IMR-90 (cell line): ENCODE measurements at regions of chr2 and their contacts with region 1.

Region 1: GRCh38 chr2:130372055-130372832 is 16.4 kb downstream of the PTPN18 start:
- DNase-seq: peak; percentile 69
- ATAC-seq: peak; percentile 93
- H3K4me3 ChIP-seq: peak overlapping the region; percentile 79
- H3K27ac ChIP-seq: peak overlapping the region; percentile 78
- H3K4me1 ChIP-seq: peaks cover 10% of the 10 kb centered on the region; the same call in 1 of the 2 replicates
- H3K27me3 ChIP-seq: no peaks in the 10 kb centered on the region
- CTCF ChIP-seq: peak; percentile 80
- POLR2A ChIP-seq: 0 out of 2 replicates have a peak, but pooled peaks have one; percentile 21
- RAD21 ChIP-seq: peak; percentile 39; the same call in 1 of the 2 replicates

Region 2: DNA sequence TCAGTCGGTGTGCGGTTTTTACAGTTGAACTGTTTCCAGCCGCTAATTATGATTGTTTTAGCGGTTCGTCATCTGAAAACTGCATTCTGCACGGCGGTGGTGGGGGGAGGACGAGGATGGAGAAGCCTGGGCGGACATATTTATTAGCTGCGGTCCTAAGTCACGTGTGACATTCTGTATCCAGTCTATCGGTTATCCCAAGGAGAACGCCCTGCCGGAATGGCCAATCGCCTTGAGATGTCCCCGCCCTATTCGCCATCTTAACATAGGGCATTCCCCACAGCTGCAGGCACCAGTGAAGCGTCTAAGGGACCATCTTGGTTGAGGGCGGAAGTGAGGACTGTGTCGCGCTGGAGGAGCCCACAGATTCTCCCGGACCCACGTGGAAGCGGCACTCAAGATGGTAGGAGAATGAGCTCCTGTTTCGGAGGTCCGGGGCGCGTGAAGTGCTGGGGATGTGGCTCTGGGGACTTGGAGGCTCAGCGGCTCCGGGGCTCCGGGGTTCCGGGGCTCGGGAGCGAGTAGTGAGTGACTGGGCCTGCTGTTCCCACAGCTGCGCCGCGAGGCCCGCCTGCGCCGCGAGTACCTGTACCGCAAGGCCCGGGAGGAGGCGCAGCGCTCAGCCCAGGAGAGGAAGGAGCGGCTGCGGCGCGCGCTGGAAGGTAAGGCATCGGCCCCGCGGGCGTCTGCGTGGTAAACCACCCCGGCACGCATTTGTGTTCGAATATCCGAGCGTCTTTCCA is 29.5 kb before region 1 on chr2 and contains the start of gene IMP4:
- CTCF ChIA-PET with region 1: interaction called, 3 read pairs
- POLR2A ChIA-PET with region 1: interaction called, 4 read pairs
- dilution Hi-C with region 1: no loop called
- in situ Hi-C with region 1: no loop called
- intact Hi-C with region 1: loop called (anchors 1 kb)
- DNase-seq: peak; percentile 100
- ATAC-seq: peak; percentile 92
- H3K4me3 ChIP-seq: peak within 1 kb of the TSS; percentile 96
- H3K27ac ChIP-seq: peak within 1 kb of the TSS; percentile 79
- H3K4me1 ChIP-seq: peaks cover 6% of the 10 kb centered on the region
- H3K27me3 ChIP-seq: no peaks in the 10 kb centered on the region
- CTCF ChIP-seq: peak; percentile 25
- POLR2A ChIP-seq: peak; percentile 55; the same call in 1 of the 2 replicates
- RAD21 ChIP-seq: 0 out of 2 replicates have a peak, but pooled peaks have one; percentile 27
- total RNA-seq, gene IMP4: 127 and 154 TPM in 2 replicates

Region 3: DNA sequence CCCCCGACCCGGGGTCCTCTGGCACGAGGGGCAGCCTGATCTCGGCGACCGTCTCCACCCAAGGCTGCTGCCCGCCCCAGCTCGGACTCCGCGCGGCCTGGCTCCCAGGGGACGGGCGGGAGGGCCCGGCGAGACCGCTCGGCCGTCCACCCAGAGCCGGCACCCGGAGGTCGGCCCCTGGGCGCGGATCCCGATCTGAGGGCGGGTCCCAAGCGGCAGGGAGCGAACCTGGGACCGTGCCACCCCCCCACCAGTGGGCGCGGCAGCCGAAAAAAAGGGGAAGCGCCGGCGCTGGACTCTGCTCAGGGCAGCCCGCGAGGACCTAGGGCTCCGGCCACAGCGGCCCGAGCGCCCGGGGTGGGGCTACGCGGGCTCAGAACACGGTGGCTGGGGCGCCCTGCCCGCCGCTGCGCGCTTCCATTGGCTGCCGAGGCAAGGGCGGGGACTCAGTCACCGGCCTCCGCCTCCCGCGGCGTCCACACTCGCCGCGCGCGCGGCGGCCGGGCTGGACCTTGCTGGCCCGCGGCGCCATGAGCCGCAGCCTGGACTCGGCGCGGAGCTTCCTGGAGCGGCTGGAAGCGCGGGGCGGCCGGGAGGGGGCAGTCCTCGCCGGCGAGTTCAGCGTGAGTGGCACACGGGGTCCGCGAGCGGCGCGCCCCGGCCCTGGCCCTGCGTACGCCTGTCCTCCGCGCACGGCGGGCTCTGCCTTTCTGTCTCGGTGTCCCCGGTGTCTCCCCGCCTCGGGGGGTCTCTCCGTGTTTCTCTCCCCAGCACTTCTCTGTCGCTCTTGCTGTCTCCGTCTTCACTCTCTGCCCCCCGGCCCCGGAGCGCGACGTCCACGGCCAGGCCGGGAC is 16.4 kb before region 1 on chr2 and contains the start of gene PTPN18:
- CTCF ChIA-PET with region 1: no interaction called
- POLR2A ChIA-PET with region 1: no interaction called
- dilution Hi-C with region 1: no loop called
- in situ Hi-C with region 1: no loop called
- intact Hi-C with region 1: loop called (anchors 1 kb)
- DNase-seq: peak; percentile 85
- ATAC-seq: peak; percentile 99
- H3K4me3 ChIP-seq: peak within 1 kb of the TSS; percentile 71
- H3K27ac ChIP-seq: peak within 1 kb of the TSS; percentile 6; the same call in 1 of the 2 replicates
- H3K4me1 ChIP-seq: no peaks in the 10 kb centered on the region; the same call in 1 of the 2 replicates
- H3K27me3 ChIP-seq: no peaks in the 10 kb centered on the region
- CTCF ChIP-seq: peak; percentile 63
- POLR2A ChIP-seq: peak; percentile 72; the same call in 1 of the 2 replicates
- RAD21 ChIP-seq: peak; percentile 61
- total RNA-seq, gene PTPN18: 7.2 and 9.7 TPM in 2 replicates

Region 4: DNA sequence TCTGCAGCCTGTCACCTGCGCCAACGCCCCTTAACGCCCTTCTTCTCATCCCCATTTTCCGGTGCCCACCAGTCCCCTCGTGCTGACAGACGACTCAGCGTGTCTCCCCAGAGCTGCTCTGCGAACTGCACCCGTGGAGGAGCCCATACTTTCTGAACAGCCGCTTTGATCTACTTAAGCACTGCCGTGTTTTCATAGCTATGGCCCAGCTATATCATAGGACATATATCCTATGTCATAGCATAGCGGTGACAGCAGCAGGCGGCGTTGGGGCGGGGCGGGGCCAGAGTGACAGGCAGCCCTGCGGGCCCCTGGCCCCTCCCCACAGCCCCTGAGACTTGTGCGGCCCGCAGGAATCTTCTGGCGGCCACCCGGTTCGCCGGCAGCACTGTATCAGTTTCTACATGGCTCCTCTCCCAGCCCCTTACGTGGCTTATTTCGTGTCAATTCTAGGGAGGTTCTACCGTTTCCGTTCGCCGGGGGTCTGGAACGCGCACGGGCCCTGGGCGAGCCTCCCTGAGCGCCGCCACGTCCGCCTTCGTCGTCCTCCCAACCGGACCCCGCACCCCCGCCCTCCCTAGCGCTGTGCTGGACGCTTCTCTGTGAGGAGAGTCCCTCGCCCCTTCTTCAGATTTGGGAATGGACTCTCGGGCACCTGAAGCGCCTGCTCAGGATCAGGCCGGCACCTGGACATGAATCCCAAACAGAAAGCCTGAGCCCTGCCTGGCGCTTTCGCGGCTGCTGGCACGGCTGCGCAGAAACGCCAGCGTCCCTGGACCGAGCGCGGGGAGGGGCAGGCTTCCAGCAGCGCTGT is 19.0 kb after region 1 on chr2:
- CTCF ChIA-PET with region 1: interaction called, 3 read pairs
- POLR2A ChIA-PET with region 1: no interaction called
- dilution Hi-C with region 1: no loop called
- in situ Hi-C with region 1: no loop called
- intact Hi-C with region 1: loop called (anchors 2 kb)
- DNase-seq: peak; percentile 68
- ATAC-seq: peak; percentile 95
- H3K4me3 ChIP-seq: peak overlapping the region; percentile 61
- H3K27ac ChIP-seq: peak overlapping the region; percentile 80
- H3K4me1 ChIP-seq: peaks cover 11% of the 10 kb centered on the region
- H3K27me3 ChIP-seq: no peaks in the 10 kb centered on the region
- CTCF ChIP-seq: no peak
- POLR2A ChIP-seq: peak; percentile 82
- RAD21 ChIP-seq: no peak